Activated CD4-positive, alpha-beta T cell treated with anti-CD3 and anti-CD28 coated beads, Interleukin-2, amount 10 ng/mL, durations not matched to agents 24 days and 14 days (primary cell): ENCODE measurements at regions of chrX and their contacts with region 1.

Region 1: DNA sequence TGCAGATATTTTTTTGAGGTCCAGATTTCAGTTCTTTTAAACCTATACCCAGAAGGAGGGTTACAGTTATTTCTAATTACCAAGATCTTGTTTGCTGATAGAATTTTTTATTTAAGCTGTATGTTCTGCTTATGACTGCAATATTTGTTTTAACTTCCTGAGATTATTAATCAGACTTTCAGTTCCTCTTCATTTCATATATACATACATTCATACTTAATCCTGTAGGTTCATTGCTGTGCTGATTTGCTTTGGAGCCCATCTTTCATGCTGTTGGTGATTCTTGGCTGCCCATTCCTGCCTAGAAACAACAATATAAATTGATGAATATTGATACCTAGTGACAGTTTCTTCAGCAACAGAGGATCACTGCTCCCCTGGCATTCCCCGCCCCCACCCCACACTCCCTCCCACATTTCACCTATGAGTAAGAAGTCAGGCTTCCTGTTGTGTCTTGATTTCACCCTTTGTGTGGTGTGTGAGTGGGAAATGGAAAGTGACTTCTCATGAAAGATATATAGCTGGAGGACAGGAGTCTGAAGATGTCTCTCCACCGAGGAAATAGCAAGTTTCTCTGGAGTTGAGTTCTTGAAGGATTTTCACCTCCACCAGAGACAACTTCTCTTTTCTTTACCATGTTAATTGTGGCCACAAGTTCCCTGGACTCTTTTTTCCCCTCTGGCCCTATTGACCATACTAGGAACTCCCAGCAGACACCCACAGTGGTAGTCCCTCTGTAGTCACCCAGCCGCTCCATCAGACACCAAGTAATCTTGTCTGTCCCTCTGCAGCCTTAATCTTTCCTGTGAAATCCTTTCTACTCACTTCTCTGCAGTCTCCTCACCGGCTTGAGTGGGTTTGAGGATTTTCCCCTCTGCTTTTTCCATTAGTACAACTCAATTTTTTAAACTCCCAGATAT is 118.4 kb downstream of the ASB9 start:
- DNase-seq: peak; percentile 67
- H3K4me3 Mint-ChIP-seq: peak overlapping the region; percentile 66
- H3K27ac Mint-ChIP-seq: peak overlapping the region; percentile 85
- H3K4me1 Mint-ChIP-seq: peaks cover 25% of the 10 kb centered on the region
- H3K27me3 Mint-ChIP-seq: no peaks in the 10 kb centered on the region

Region 2: DNA sequence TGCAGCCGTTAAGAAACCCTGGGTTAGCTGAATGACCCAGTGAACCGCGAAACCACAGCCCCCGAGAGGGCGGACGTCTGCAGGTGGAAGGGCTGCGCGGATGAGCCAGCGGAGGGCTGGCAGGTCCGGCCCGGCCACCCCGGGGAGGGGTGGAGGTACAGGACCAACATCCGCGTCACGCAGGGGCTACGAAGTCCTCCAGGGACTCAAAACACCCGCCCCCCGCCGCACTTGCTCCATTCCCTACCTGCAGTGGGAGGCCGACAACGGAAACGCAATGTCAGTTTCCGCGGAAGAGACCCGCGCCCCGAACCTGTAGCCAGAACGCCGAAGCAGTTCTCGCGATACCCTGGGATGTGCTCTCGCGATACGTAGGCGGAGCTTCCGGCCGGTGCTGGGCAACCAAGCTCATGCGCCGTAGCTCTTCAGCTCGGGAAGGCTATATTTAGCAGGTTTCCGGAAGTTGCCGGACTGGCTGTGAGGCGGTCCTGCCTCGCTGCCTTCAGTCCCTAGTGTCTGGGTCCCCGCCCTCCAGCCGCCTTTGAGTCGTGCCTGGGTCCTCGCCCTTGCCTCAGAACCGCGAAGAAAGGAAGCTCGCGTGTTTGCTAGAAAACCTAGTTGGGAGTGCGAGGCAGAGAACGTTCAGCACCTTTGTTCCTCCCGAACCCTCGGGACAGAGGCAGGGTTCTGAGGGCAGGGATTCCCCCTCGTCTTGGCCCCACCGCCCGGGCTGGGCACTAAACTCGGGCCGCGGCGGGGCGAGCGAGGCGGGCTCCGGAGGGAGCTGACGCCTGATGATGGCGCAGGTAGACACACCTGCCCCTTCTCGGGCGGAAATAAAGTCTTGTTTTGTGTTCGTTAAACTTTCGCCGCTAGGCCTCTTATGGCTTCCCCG is 1417.0 kb before region 1 on chrX and contains the starts of genes OFD1 and TRAPPC2:
- intact Hi-C with region 1: loop called (anchors 10 kb)
- DNase-seq: peak; percentile 97
- H3K4me3 Mint-ChIP-seq: peak within 1 kb of the TSS; percentile 99
- H3K27ac Mint-ChIP-seq: peak within 1 kb of the TSS; percentile 97
- H3K4me1 Mint-ChIP-seq: peaks cover 35% of the 10 kb centered on the region
- H3K27me3 Mint-ChIP-seq: no peaks in the 10 kb centered on the region
- total RNA-seq, gene OFD1: 18.3 and 19.3 TPM in 2 replicates
- total RNA-seq, gene TRAPPC2: 13.6 and 15.4 TPM in 2 replicates

Region 3: DNA sequence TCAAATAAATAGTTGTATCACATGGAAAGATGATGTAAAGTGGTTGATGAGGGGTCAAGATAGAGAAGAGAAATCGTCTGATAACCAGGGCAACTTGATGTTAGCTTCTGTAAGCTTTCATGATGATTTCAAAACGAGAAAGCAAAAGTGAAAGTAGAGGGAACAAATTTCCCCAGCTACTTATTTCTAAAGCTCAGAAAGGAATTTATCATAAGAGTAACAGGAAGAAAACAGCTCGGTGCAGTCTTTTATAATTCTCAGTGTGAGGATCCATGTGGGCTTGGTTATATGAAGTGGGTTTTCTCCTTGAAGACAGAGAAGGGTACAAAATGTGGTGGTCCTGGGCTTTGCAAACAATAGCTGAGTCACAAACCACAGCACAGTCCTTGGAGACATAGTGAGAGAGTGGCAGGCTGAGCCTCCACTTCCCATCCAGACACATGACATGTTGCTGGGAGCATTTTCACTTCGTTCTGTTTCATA is 654.3 kb before region 1 on chrX:
- intact Hi-C with region 1: loop called (anchors 10 kb)
- DNase-seq: peak; percentile 64
- H3K4me3 Mint-ChIP-seq: peak overlapping the region; percentile 66
- H3K27ac Mint-ChIP-seq: peak overlapping the region; percentile 87
- H3K4me1 Mint-ChIP-seq: peaks cover 3% of the 10 kb centered on the region
- H3K27me3 Mint-ChIP-seq: peaks cover 1% of the 10 kb centered on the region

Region 4: GRCh38 chrX:15335135-15336022 is 183.9 kb after region 1 on chrX and contains the start of gene PIGA:
- intact Hi-C with region 1: loop called (anchors 10 kb)
- DNase-seq: peak; percentile 97
- H3K4me3 Mint-ChIP-seq: peak within 1 kb of the TSS; percentile 94
- H3K27ac Mint-ChIP-seq: peak within 1 kb of the TSS; percentile 94
- H3K4me1 Mint-ChIP-seq: peaks cover 9% of the 10 kb centered on the region
- H3K27me3 Mint-ChIP-seq: peaks cover 11% of the 10 kb centered on the region
- total RNA-seq, gene PIGA: 29.4 and 33.9 TPM in 2 replicates